ENCODE measurements at regions of chr2 and their contacts with region 1.

Region 1: GRCh38 chr2:157480182-157480961 is 36.5 kb upstream of the CYTIP start:
- DNase-seq: peak; percentile 14
- CTCF ChIP-seq: no peak

Region 2: GRCh38 chr2:157420771-157421323 is 59.5 kb before region 1 on chr2:
- in situ Hi-C with region 1: loop called (anchors 10 kb)
- DNase-seq: peak; percentile 10
- CTCF ChIP-seq: no peak